Mammary epithelial cell (primary cell): ENCODE measurements at regions of chr12 and their contacts with region 1.

Region 1: DNA sequence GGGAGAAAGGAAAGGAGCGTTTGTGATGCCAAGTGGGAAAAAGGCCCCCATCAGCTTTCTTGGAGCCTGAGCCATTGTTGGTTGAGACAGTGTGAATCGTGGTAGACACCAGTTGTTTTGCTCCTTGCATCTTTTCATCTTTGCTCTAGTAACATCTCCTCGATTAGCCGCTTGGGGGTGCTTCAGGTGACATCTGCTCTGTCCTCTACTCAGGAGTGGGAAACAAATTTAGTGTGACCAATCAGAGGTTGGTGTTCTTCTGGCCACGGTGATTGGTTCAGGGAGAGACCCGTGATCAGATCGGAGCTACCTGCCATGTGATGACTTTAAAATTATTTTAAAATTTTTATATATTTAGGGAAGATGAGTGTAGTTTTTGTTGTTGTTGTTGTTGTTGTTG is 66.2 kb upstream of the RPH3A start:
- DNase-seq: no peak
- H3K4me3 ChIP-seq: no peak overlapping the region
- H3K27ac ChIP-seq: no peak overlapping the region
- H3K4me1 ChIP-seq: no peaks in the 10 kb centered on the region
- H3K27me3 ChIP-seq: no peaks in the 10 kb centered on the region
- CTCF ChIP-seq: no peak

Region 2: GRCh38 chr12:112463478-112463877 is 261.9 kb before region 1 on chr12:
- CTCF ChIA-PET with region 1: no interaction called
- dilution Hi-C with region 1: no loop called
- in situ Hi-C with region 1: no loop called
- intact Hi-C with region 1: no loop called
- DNase-seq: no peak
- H3K4me3 ChIP-seq: no peak overlapping the region
- H3K27ac ChIP-seq: no peak overlapping the region
- H3K4me1 ChIP-seq: no peaks in the 10 kb centered on the region
- H3K27me3 ChIP-seq: no peaks in the 10 kb centered on the region
- CTCF ChIP-seq: no peak

Region 3: DNA sequence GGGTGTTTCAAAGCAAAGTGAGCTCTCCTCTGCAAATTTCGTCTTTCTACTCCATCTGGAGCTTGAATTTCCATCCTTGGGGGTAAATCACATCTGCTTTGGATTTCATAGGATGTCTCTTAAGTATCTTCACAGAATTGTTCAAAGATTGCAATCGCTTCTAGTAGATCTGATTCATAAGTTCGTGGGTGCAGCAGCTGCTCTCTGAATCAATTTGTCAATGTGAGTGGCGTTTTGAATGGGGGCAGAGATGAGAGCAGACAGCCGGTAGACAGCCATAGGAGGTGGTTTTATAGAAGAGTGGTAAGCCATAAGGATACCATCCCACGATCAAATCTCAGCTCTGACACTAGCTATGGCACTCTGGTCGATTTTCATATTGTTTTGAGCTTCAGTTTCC is 79.8 kb before region 1 on chr12:
- CTCF ChIA-PET with region 1: interaction called, 22 read pairs
- dilution Hi-C with region 1: no loop called
- in situ Hi-C with region 1: no loop called
- intact Hi-C with region 1: no loop called
- DNase-seq: no peak
- H3K4me3 ChIP-seq: no peak overlapping the region
- H3K27ac ChIP-seq: no peak overlapping the region
- H3K4me1 ChIP-seq: no peaks in the 10 kb centered on the region
- H3K27me3 ChIP-seq: no peaks in the 10 kb centered on the region
- CTCF ChIP-seq: no peak

Region 4: DNA sequence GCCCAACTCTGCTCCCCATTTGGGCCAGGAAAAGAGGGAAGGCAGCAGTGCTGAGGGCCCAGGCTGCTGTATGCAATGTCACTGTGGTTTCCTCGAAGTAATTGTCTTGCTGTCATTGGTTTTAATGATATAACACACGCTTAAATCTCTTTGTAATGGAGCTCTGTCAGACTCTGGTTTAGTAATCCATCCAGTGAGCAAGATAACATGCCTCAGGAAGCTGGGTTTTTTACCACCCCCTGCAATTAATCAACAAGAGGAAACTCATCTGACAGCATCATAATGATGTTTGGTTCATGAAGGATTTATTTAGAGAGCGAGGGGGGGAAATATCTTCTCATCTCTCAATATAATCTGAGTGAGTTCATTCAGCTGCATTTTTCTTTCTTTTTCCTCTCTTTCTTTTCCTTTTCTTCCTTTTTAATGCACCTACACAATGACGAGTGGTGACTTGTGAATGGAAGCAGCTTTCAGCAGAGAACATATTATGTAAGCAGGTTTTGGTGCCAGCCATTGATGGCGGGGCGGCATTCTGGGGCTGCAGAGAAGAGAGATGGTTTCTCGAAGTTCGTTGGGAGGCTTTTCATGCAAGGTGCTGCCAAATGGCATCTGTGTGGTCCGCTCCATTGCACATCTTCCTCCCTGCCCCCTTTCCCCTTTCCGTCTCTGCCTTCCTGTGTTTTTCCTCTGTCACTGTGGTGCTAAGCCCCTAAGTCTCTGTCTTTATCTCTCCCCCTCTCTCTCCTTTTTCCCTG is 72.8 kb after region 1 on chr12:
- CTCF ChIA-PET with region 1: no interaction called
- dilution Hi-C with region 1: loop called (anchors 5 kb)
- in situ Hi-C with region 1: no loop called
- intact Hi-C with region 1: no loop called
- DNase-seq: no peak
- H3K4me3 ChIP-seq: no peak overlapping the region
- H3K27ac ChIP-seq: no peak overlapping the region
- H3K4me1 ChIP-seq: no peaks in the 10 kb centered on the region
- H3K27me3 ChIP-seq: peaks cover 11% of the 10 kb centered on the region
- CTCF ChIP-seq: no peak

Region 5: GRCh38 chr12:112906712-112907414 is 181.5 kb after region 1 on chr12 and contains the start of gene OAS1:
- CTCF ChIA-PET with region 1: no interaction called
- dilution Hi-C with region 1: no loop called
- in situ Hi-C with region 1: no loop called
- intact Hi-C with region 1: no loop called
- DNase-seq: peak; percentile 61
- H3K4me3 ChIP-seq: peak within 1 kb of the TSS; percentile 0 to 47 (median 32)
- H3K27ac ChIP-seq: no peak within 1 kb of the TSS
- H3K4me1 ChIP-seq: peaks cover 4% of the 10 kb centered on the region
- H3K27me3 ChIP-seq: no peaks in the 10 kb centered on the region
- CTCF ChIP-seq: no peak
- total RNA-seq, gene OAS1: 4.0 to 4.2 TPM